IMR-90 (cell line): ENCODE measurements at regions of chr19 and their contacts with region 1.

Region 1: GRCh38 chr19:12696366-12697335 is at the start of gene FBXW9:
- DNase-seq: peak; percentile 95
- ATAC-seq: peak; percentile 86
- H3K4me3 ChIP-seq: peak within 1 kb of the TSS; percentile 80
- H3K27ac ChIP-seq: peak within 1 kb of the TSS; percentile 63
- H3K4me1 ChIP-seq: peaks cover 2% of the 10 kb centered on the region; the same call in 1 of the 2 replicates
- H3K27me3 ChIP-seq: no peaks in the 10 kb centered on the region
- CTCF ChIP-seq: no peak
- POLR2A ChIP-seq: peak; percentile 43; the same call in 1 of the 2 replicates
- RAD21 ChIP-seq: no peak
- total RNA-seq, gene FBXW9: 8.6 and 9.5 TPM in 2 replicates

Region 2: DNA sequence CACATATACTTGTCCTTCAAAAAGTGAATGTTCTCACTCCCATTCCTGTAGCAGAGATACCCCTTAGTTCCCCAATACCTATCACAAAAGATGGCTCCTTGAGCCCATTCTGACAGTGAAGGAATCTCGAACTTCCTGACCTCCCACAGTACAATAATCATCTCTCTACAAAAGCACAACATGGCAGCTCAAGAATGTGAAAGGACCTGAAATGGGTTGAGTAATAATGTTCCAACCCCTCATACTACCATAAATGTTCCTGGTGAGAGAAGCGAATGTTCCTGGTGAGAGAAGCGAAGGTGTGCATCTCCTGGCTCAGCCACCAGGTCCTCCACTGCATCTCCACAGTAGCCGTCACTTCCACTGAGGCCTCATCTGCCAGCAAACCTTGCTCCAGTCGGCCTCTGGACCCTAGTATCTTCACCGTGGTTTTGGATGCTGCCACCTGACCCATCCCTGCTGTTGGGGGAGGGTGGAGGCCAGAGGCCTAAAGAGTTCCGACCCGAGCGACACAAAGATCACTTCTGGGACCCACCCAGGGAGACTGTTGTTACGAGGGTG is 119.3 kb before region 1 on chr19:
- CTCF ChIA-PET with region 1: no interaction called
- POLR2A ChIA-PET with region 1: interaction called, 17 read pairs
- dilution Hi-C with region 1: no loop called
- in situ Hi-C with region 1: no loop called
- intact Hi-C with region 1: no loop called
- DNase-seq: no peak
- ATAC-seq: no peak
- H3K4me3 ChIP-seq: no peak overlapping the region
- H3K27ac ChIP-seq: no peak overlapping the region
- H3K4me1 ChIP-seq: no peaks in the 10 kb centered on the region; the same call in 1 of the 2 replicates
- H3K27me3 ChIP-seq: no peaks in the 10 kb centered on the region
- CTCF ChIP-seq: no peak
- POLR2A ChIP-seq: no peak
- RAD21 ChIP-seq: no peak

Region 3: GRCh38 chr19:12669270-12670158 is 27.1 kb before region 1 on chr19:
- CTCF ChIA-PET with region 1: no interaction called
- POLR2A ChIA-PET with region 1: no interaction called
- dilution Hi-C with region 1: no loop called
- in situ Hi-C with region 1: no loop called
- intact Hi-C with region 1: no loop called
- DNase-seq: peak; percentile 85
- ATAC-seq: peak; percentile 54
- H3K4me3 ChIP-seq: peak overlapping the region; percentile 58
- H3K27ac ChIP-seq: peak overlapping the region; percentile 79
- H3K4me1 ChIP-seq: peaks cover 15% of the 10 kb centered on the region
- H3K27me3 ChIP-seq: no peaks in the 10 kb centered on the region
- CTCF ChIP-seq: no peak
- POLR2A ChIP-seq: no peak
- RAD21 ChIP-seq: no peak

Region 4: DNA sequence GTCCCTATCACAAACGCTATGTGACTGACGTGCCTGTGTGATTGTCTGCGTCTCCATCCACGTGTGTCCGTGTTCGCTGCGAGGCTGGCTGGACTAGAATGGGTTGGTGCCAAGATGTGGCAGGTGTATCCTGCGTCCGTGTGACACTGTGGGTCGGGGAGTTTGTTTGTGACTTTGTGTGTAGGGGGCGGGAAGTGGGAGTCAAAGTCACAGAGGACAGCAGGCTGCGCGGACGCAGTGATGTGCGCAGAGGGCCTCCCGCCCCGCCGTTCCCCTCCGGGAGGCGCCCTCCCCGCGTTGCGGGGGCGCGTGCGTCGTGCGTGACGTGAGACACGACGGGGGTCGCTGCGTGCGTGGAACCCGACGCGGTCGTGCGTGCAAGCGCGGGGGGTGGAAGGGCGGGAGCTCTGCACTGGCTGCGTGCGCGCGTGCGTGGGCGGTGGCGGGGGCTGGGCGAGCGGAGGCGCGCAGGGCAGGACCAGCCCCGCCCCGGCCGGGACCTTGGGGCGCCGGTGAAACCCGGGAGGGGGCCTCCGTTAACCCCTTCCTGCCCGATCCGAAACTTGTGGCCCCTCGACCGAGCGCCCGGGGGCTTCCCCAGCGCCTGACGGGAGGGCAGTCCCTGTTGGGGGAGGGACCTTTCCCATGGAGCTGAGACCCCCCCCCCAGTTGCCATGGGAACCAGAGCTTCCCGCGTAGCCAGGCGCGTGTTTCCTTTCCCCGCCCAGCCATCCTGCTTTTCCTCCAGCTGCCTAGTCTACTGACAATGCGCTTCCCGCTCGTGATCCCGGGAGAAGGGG is 85.8 kb after region 1 on chr19:
- CTCF ChIA-PET with region 1: no interaction called
- POLR2A ChIA-PET with region 1: no interaction called
- dilution Hi-C with region 1: no loop called
- in situ Hi-C with region 1: no loop called
- intact Hi-C with region 1: no loop called
- DNase-seq: peak; percentile 85
- ATAC-seq: peak; percentile 62
- H3K4me3 ChIP-seq: peak overlapping the region; percentile 50
- H3K27ac ChIP-seq: peak overlapping the region; percentile 89
- H3K4me1 ChIP-seq: peaks cover 49% of the 10 kb centered on the region
- H3K27me3 ChIP-seq: no peaks in the 10 kb centered on the region
- CTCF ChIP-seq: 0 out of 2 replicates have a peak, but pooled peaks have one; percentile 12
- POLR2A ChIP-seq: peak; percentile 24; the same call in 1 of the 2 replicates
- RAD21 ChIP-seq: no peak

Region 5: DNA sequence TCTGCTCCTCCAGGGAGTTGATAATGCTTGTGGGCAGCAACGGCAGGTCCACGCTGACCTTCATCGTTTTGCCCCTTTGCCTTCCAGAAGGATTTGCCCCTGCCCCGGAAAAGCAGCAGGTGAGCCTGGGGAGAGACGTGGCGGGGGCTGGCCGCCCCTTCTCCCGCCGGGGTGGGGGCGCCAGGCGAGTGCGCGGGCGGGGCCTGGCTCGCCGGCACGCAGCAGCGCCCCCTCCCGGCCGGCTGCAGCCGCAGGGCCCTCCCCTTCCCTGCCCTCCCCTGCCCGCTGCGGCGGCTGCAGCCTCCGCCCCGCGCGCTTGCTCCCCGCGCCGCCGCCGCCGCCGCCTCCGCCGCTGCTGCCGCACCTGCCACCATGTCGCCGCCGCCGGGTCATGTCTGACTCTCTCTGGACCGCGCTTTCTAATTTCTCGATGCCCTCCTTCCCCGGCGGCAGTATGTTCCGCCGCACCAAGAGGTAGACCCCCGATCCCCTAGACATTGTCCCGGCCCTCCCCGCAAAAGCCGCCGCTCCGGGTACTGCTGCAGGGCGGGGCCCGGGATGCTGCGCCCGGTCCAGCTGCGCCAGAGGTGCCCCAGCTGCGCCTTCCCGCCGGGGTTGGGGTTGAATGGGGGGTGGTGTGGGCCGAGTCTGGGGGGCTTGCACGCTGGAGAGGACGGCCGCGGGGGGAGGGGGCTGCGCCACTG is 141.7 kb after region 1 on chr19 and contains the start of gene MAST1:
- CTCF ChIA-PET with region 1: no interaction called
- POLR2A ChIA-PET with region 1: no interaction called
- dilution Hi-C with region 1: no loop called
- in situ Hi-C with region 1: no loop called
- intact Hi-C with region 1: no loop called
- DNase-seq: no peak
- ATAC-seq: peak; percentile 67
- H3K4me3 ChIP-seq: peak within 1 kb of the TSS; percentile 34
- H3K27ac ChIP-seq: no peak within 1 kb of the TSS
- H3K4me1 ChIP-seq: peaks cover 4% of the 10 kb centered on the region; the same call in 1 of the 2 replicates
- H3K27me3 ChIP-seq: peaks cover 71% of the 10 kb centered on the region
- CTCF ChIP-seq: peak; percentile 59
- POLR2A ChIP-seq: no peak
- RAD21 ChIP-seq: peak; percentile 28; the same call in 1 of the 2 replicates
- total RNA-seq, gene MAST1: 0.28 and 1.1 TPM in 2 replicates